Activated B cell treated with CpG ODN at 0.5 μM for 24 hours (primary cell): ENCODE measurements at regions of chr6 and their contacts with region 1.

Region 1: DNA sequence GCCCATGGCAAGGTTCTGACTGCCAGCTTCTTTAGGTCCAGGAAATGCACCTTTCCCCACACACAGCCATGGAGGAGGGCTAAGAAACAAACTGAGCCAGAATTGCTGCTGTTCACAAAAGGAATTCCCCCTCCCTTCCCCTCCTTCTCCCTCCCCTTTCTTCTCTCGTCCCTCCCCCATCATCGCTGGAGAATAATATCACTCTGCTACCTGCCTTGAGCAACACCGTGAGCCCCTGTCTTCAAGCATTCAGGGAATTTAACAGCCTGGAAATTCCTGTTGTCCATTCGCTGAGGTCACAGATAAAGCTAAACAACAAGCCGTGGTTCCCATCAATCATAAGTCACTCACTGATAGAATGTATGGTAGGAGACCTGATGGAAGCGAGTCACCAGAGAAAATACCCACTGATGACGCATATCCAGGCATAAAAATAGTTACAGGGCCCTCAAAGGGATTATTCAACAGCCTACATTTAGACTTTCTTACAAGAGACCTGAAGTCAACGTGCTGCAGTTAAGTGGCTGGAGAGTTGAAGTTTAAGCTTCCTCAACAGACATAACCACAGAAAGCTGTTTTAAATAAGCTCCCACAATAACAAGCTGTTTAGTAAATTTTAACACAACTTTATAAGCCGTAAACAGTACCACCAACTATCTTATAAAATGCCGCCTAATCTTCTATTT is 59.7 kb downstream of the HIVEP2 start:
- DNase-seq: peak; percentile 28
- ATAC-seq: peak; percentile 83
- H3K4me3 Mint-ChIP-seq: peak overlapping the region; percentile 98
- H3K27ac Mint-ChIP-seq: peak overlapping the region; percentile 99
- H3K4me1 Mint-ChIP-seq: peaks cover 86% of the 10 kb centered on the region
- H3K27me3 Mint-ChIP-seq: no peaks in the 10 kb centered on the region
- CTCF ChIP-seq: no peak

Region 2: GRCh38 chr6:142746524-142746923 is 138.8 kb before region 1 on chr6:
- CTCF ChIA-PET with region 1: interaction called, 9 read pairs
- POLR2A ChIA-PET with region 1: no interaction called
- intact Hi-C with region 1: loop called (anchors 1 kb)
- DNase-seq: no peak
- ATAC-seq: peak; percentile 58
- H3K4me3 Mint-ChIP-seq: no peak overlapping the region
- H3K27ac Mint-ChIP-seq: no peak overlapping the region
- H3K4me1 Mint-ChIP-seq: peaks cover 11% of the 10 kb centered on the region
- H3K27me3 Mint-ChIP-seq: peaks cover 3% of the 10 kb centered on the region
- CTCF ChIP-seq: no peak

Region 3: GRCh38 chr6:142819603-142820337 is 65.6 kb before region 1 on chr6:
- CTCF ChIA-PET with region 1: interaction called, 12 read pairs
- POLR2A ChIA-PET with region 1: interaction called, 16 read pairs
- intact Hi-C with region 1: loop called (anchors 1 kb)
- DNase-seq: no peak
- ATAC-seq: peak; percentile 61
- H3K4me3 Mint-ChIP-seq: peak overlapping the region; percentile 74
- H3K27ac Mint-ChIP-seq: peak overlapping the region; percentile 93
- H3K4me1 Mint-ChIP-seq: peaks cover 79% of the 10 kb centered on the region
- H3K27me3 Mint-ChIP-seq: no peaks in the 10 kb centered on the region
- CTCF ChIP-seq: no peak

Region 4: DNA sequence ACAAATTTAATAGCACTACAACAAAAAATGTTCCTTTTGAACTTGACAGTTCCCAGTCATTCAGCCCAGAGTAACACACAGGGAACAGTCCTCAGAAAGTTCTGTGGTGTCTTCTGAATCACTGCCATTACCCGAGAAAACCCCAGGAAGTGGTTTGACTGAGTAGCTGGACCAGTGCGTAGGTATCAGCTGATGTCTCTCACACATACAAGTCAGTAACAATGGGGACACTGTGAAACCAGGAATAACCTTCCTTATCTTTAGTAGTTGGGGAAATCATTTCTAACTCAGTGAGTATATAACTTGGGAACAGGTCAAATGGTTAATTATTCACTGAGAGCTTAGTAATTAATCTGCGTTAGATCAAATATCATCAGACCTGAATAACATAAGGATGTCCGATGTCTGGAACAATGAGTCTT is 13.4 kb before region 1 on chr6:
- CTCF ChIA-PET with region 1: interaction called, 6 read pairs
- POLR2A ChIA-PET with region 1: interaction called, 13 read pairs
- intact Hi-C with region 1: loop called (anchors 1 kb)
- DNase-seq: no peak
- ATAC-seq: peak; percentile 91
- H3K4me3 Mint-ChIP-seq: peak overlapping the region; percentile 49
- H3K27ac Mint-ChIP-seq: peak overlapping the region; percentile 82
- H3K4me1 Mint-ChIP-seq: peaks cover 84% of the 10 kb centered on the region
- H3K27me3 Mint-ChIP-seq: no peaks in the 10 kb centered on the region
- CTCF ChIP-seq: no peak

Region 5: DNA sequence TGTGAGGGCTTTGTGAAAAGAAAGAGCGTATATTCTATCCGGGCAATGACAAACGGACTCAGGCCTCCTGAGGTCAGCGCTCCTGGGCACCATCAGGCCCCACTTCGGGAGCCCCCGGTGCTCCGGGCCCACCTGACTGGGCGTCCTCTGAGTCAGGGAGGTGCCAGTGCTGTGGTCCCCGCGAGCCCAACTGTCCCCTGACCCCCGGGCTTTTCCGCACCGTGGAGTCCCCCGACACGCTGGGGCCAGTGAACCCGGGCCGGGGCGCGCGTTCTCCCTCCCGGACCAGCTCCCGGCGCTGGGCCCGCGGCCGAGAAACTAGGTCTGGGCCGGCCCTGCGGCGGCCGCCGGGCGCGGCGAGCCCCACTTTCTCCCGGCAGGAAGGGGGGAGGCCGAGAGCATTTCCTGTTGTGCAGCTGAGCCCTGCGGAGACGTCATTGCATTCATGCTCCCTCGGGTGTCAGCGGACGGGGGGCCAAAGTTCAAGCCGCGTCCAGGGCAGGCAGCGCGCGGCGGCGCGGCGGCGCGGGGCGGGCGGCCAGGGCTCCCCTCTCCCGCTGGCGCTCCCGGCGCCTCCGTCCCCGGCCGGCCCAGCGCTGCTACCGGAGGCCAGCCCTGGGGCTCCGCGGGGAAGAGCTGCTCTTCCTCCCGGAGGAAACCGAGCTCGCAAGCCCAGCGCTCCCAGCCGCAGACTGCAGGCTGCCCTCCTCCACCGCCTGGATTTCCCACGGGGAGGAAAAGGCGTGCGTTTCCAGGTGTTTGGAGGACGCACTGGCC is 41.4 kb after region 1 on chr6:
- CTCF ChIA-PET with region 1: no interaction called
- POLR2A ChIA-PET with region 1: interaction called, 29 read pairs
- intact Hi-C with region 1: loop called (anchors 1 kb)
- DNase-seq: peak; percentile 72
- ATAC-seq: peak; percentile 93
- H3K4me3 Mint-ChIP-seq: peak overlapping the region; percentile 86
- H3K27ac Mint-ChIP-seq: peak overlapping the region; percentile 93
- H3K4me1 Mint-ChIP-seq: peaks cover 50% of the 10 kb centered on the region
- H3K27me3 Mint-ChIP-seq: no peaks in the 10 kb centered on the region
- CTCF ChIP-seq: no peak